HEK293 (cell line): ENCODE measurements at regions of chr1 and their contacts with region 1.

Region 1: DNA sequence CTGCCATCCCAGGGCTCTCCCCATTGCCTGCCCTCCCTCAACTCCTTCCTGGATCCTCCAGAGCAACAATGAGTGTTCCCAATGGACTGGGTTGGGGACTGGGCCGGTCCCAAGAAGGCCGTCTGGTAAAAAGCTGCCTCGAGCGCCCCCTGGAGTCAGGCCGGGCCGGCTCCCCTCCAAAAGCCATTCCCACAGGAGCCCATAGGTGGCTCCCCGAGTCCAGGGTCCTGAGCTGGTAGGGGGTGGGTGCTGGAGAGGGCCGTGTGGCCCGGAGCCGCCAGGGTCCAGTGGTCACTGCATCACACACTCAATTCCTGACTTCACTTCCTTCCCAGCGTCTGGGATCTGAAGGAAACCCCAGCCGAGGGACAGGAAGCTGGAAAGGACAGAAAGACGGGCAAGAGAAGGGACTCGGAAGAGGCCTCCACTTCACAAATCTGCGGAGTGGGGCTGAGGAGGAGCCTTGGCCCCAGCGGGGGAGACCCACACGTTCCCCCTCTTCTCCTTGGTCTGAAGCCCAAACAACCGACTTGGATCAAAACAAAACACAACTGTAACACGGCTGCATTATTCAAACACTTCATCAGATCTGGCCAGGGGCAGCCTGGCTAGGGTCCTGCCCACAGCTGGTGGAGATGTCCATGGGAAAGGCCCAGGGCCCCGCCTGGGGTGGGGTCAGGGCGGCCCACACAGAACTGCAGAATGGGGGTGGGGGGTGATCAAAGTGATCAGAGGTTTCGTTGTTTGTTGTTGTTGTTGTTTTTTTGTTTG is 10.9 kb upstream of the ALDH4A1 start:
- H3K4me3 ChIP-seq: no peak overlapping the region
- H3K27ac ChIP-seq: no peak overlapping the region
- H3K4me1 ChIP-seq: no peaks in the 10 kb centered on the region; the same call in none of the 2 replicates
- CTCF ChIP-seq: peak; percentile 87

Region 2: DNA sequence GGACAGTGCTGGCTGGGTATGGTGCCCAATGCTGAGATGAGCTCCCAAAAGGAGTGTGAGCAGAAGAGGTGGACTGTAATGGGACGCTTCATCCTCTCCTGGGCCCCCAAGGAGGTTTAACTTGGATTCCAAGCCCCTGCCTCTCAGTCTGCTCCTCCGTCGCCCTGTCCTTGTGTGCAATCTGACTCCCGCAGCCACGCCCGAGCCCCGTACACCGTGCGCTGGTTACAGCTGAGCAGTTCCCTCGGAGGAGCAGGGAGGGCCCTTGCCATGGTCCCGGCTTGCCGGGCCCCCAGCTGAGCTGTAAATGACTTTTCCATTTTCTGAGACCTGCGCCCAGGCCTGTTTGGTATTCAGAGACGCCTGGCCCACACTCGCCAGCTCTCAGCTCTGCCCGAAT is 228.9 kb before region 1 on chr1:
- CTCF ChIA-PET with region 1: no interaction called
- POLR2A ChIA-PET with region 1: no interaction called
- H3K4me3 ChIP-seq: no peak overlapping the region
- H3K27ac ChIP-seq: no peak overlapping the region
- H3K4me1 ChIP-seq: no peaks in the 10 kb centered on the region
- CTCF ChIP-seq: no peak

Region 3: DNA sequence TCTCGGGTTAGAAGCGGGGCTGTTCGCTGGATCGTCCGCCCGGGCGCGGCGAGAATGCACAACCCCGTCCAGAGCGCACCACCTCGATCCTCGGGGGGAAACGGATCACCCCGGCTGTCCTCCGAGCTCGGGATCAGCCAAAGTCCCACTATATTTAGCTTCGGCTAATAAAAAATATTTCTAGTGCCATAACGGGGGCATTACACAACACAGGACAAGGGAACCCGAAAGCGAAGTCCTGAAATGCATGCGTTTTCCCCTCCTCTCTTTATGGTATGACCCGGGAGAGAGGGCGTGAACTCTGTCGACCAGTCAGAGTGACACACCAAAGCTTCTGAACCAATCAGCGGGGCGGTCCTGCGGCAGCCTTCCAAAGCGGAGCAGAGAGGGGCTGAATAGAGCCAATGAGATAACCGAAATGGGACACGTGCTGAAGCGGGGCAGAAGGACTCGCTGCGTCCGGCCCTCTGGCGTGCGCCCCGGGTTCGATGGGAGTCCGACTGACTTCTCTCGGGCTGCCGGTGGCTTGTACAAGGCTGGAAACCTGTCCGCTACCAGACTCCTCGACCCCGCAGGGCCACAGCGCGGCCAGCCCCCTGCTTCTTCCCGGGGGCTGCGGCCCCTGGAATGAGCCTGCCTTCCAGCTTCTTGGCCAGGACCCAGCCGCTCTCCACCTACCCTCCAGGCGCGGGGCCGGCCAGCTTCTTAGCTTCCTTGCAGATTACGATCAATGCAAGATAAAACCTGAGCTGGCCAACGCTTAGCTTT is 10.5 kb before region 1 on chr1 and contains the start of gene ALDH4A1:
- CTCF ChIA-PET with region 1: interaction called, 24 read pairs
- POLR2A ChIA-PET with region 1: interaction called, 7 read pairs
- H3K4me3 ChIP-seq: peak within 1 kb of the TSS; percentile 58
- H3K27ac ChIP-seq: peak within 1 kb of the TSS; percentile 70
- H3K4me1 ChIP-seq: 0 out of 2 replicates have a peak, but pooled peaks cover 3% of the 10 kb centered on the region
- CTCF ChIP-seq: no peak

Region 4: GRCh38 chr1:18941221-18942141 is 28.2 kb after region 1 on chr1:
- CTCF ChIA-PET with region 1: interaction called, 59 read pairs
- POLR2A ChIA-PET with region 1: interaction called, 4 read pairs
- H3K4me3 ChIP-seq: no peak overlapping the region
- H3K27ac ChIP-seq: peak overlapping the region; percentile 7; the same call in 1 of the 2 replicates
- H3K4me1 ChIP-seq: peaks cover 21% of the 10 kb centered on the region
- CTCF ChIP-seq: no peak

Region 5: GRCh38 chr1:18972531-18972930 is 59.3 kb after region 1 on chr1:
- CTCF ChIA-PET with region 1: interaction called, 56 read pairs
- POLR2A ChIA-PET with region 1: no interaction called
- H3K4me3 ChIP-seq: no peak overlapping the region
- H3K27ac ChIP-seq: no peak overlapping the region
- H3K4me1 ChIP-seq: no peaks in the 10 kb centered on the region
- CTCF ChIP-seq: no peak

Region 6: GRCh38 chr1:19054216-19054615 is 141.0 kb after region 1 on chr1:
- CTCF ChIA-PET with region 1: interaction called, 16 read pairs
- POLR2A ChIA-PET with region 1: interaction called, 3 read pairs
- H3K4me3 ChIP-seq: no peak overlapping the region
- H3K27ac ChIP-seq: no peak overlapping the region
- H3K4me1 ChIP-seq: no peaks in the 10 kb centered on the region
- CTCF ChIP-seq: no peak

Region 7: DNA sequence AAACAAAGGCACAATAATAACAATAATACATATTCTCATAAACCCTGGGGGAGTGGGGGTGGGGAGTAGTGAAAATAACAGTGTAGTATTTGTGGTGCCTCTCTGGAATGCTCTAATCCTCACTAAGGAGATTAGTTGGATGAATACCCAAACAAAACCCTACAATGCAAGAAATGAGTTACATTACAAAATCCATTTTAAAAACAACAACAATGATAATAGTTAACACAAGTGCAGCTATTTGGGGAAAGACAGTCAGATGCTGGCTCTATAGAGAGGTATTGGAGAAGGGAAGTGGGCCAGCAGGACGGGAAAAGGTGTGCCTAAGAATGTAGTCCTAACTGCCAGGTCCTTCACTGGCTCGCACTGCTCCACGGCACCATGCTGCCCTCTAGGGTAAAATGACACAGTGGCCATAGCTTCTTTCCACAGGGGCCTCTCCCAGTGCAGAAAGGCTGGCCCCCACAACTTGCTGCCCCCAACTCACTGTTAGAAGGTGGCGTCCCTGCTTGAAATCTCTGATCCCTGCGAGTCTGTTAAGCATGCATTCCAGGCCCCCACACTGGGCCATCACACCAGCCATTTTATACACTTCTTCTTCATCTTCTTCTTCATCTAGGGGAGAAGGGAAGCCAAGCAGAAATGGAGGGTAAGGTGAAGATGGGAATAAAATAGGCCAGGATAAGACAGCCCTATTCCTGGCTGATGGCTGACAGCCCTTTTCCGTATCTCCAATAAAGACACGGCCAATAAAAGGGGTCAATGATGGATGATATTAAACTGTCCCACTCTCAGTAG is 183.0 kb after region 1 on chr1:
- CTCF ChIA-PET with region 1: interaction called, 102 read pairs
- POLR2A ChIA-PET with region 1: no interaction called
- H3K4me3 ChIP-seq: no peak overlapping the region
- H3K27ac ChIP-seq: no peak overlapping the region
- H3K4me1 ChIP-seq: no peaks in the 10 kb centered on the region
- CTCF ChIP-seq: peak; percentile 35; the same call in 1 of the 2 replicates